ENCODE measurements at regions of chr2 and their contacts with region 1.

Region 1: GRCh38 chr2:69724540-69725159 is 17.3 kb upstream of the ANXA4 start:
- DNase-seq: peak; percentile 71 to 86 (median 77)
- H3K4me3 ChIP-seq: peak overlapping the region; percentile 38
- H3K4me3 Mint-ChIP-seq: peak overlapping the region in 6 of 7 donors; percentile 39 to 74 (median 58)
- H3K27ac ChIP-seq: no peak overlapping the region
- H3K27ac Mint-ChIP-seq: peak overlapping the region in 2 of 8 donors; percentile 33 to 79
- H3K4me1 ChIP-seq: peaks cover 6% of the 10 kb centered on the region
- H3K4me1 Mint-ChIP-seq: peaks cover 4 to 7% (median 7%) of the 10 kb centered on the region in 3 donors
- H3K27me3 ChIP-seq: no peaks in the 10 kb centered on the region
- H3K27me3 Mint-ChIP-seq: peaks cover 0 to 3% of the 10 kb centered on the region in 2 donors

Region 2: DNA sequence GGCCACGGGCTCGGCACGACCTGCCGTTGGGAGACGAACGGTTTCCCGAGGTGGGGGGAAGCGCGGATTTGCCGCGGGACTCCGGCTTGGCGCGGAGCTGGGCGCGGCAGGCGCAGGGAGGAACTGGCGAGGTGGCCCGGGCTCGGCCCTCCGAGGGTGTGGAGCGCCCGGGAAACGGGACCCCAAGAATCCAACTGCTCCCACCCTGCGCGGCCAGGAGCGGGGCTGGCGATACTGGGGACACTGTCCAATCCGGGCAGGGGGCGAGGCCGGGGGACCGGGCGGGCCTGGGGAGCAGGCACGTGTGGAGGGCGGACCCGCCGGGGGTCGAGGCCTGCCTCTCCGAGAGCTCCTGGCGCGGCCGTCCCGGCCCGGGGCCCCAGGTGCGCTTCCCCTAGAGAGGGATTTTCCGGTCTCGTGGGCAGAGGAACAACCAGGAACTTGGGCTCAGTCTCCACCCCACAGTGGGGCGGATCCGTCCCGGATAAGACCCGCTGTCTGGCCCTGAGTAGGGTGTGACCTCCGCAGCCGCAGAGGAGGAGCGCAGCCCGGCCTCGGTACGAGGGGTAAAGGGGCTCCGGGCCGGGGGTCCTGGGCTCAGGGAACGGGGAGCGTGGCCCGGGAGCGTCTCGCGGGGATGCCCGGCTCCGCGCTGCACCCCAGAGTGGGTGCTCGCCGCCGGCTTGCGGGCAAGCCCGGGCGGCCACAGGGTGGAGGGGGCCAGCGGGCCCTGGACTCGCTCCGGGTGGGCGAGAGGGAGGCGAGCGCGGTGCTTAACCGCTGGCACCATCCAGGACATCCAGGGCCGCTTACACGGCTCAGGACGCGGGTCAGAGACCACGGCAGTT is 17.2 kb after region 1 on chr2 and contains the start of gene ANXA4:
- CTCF ChIA-PET with region 1: interaction called, 16 read pairs
- POLR2A ChIA-PET with region 1: no interaction called
- DNase-seq: peak; percentile 47 to 73 (median 61)
- H3K4me3 ChIP-seq: peak within 1 kb of the TSS; percentile 56
- H3K4me3 Mint-ChIP-seq: peak within 1 kb of the TSS; percentile 94 to 98 (median 96)
- H3K27ac ChIP-seq: peak within 1 kb of the TSS; percentile 51
- H3K27ac Mint-ChIP-seq: peak within 1 kb of the TSS; percentile 71 to 97 (median 92)
- H3K4me1 ChIP-seq: peaks cover 11% of the 10 kb centered on the region
- H3K4me1 Mint-ChIP-seq: peaks cover 18 to 21% (median 19%) of the 10 kb centered on the region in 3 donors
- H3K27me3 ChIP-seq: no peaks in the 10 kb centered on the region
- H3K27me3 Mint-ChIP-seq: no peaks in the 10 kb centered on the region
- total RNA-seq, gene ANXA4: 30.2 to 33.7 TPM

Region 3: DNA sequence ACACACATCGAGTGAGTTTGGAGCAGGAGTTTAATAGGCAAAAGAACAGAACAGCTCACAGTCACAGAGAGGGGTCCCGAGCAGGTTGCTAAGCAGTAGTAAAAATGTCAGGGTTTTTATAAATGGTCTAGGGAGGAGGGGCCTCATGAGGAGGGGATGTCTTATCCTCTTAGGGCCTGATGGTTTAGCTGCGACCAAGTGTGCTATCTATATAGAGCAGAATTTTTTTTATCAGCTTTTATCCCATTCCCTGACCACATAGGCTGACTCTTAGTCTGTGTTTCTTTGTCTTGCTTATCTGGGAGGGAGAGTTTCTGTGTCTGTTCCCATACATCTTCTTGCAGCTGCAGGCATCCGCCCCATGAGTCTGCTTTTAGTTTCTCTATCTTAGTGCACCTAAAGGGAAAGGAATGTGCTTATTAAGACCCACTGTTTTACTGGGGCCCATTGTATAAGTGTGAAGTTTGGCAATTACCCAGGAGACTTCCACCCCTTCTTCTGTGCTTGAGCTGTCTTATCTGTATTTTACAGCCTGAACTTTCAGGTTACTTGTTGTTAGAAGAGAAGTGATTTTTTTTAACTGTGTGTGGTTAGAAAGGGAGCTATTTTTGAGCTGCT is 74.4 kb after region 1 on chr2:
- CTCF ChIA-PET with region 1: interaction called, 14 read pairs
- POLR2A ChIA-PET with region 1: no interaction called
- DNase-seq: no peak
- H3K4me3 ChIP-seq: no peak overlapping the region
- H3K4me3 Mint-ChIP-seq: peak overlapping the region in 3 of 7 donors; percentile 5 to 52 (median 18)
- H3K27ac ChIP-seq: no peak overlapping the region
- H3K27ac Mint-ChIP-seq: peak overlapping the region in 3 of 8 donors; percentile 17 to 75 (median 55)
- H3K4me1 ChIP-seq: no peaks in the 10 kb centered on the region
- H3K4me1 Mint-ChIP-seq: peaks cover 6 to 13% (median 11%) of the 10 kb centered on the region in 3 donors
- H3K27me3 ChIP-seq: no peaks in the 10 kb centered on the region
- H3K27me3 Mint-ChIP-seq: no peaks in the 10 kb centered on the region

Region 4: GRCh38 chr2:69816923-69817542 is 92.4 kb after region 1 on chr2:
- CTCF ChIA-PET with region 1: interaction called, 194 read pairs
- POLR2A ChIA-PET with region 1: no interaction called
- DNase-seq: peak; percentile 46 to 81 (median 74)
- H3K4me3 ChIP-seq: no peak overlapping the region
- H3K4me3 Mint-ChIP-seq: no peak overlapping the region
- H3K27ac ChIP-seq: no peak overlapping the region
- H3K27ac Mint-ChIP-seq: no peak overlapping the region
- H3K4me1 ChIP-seq: no peaks in the 10 kb centered on the region
- H3K4me1 Mint-ChIP-seq: peaks cover 2 to 9% (median 5%) of the 10 kb centered on the region in 3 donors
- H3K27me3 ChIP-seq: no peaks in the 10 kb centered on the region
- H3K27me3 Mint-ChIP-seq: no peaks in the 10 kb centered on the region

Region 5: GRCh38 chr2:69829256-69830046 is 104.8 kb after region 1 on chr2 and contains the start of gene GMCL1:
- CTCF ChIA-PET with region 1: interaction called, 11 read pairs
- POLR2A ChIA-PET with region 1: no interaction called
- DNase-seq: peak; percentile 99
- H3K4me3 ChIP-seq: peak within 1 kb of the TSS; percentile 98
- H3K4me3 Mint-ChIP-seq: peak within 1 kb of the TSS; percentile 84 to 99 (median 96)
- H3K27ac ChIP-seq: peak within 1 kb of the TSS; percentile 93
- H3K27ac Mint-ChIP-seq: peak within 1 kb of the TSS; percentile 95 to 99 (median 97)
- H3K4me1 ChIP-seq: peaks cover 42% of the 10 kb centered on the region
- H3K4me1 Mint-ChIP-seq: peaks cover 42 to 61% (median 56%) of the 10 kb centered on the region in 3 donors
- H3K27me3 ChIP-seq: no peaks in the 10 kb centered on the region
- H3K27me3 Mint-ChIP-seq: no peaks in the 10 kb centered on the region
- total RNA-seq, gene GMCL1: 15.5 to 17.6 TPM

Measured in CD8-positive, alpha-beta memory T cell (primary cell).